Naive thymus-derived CD4-positive, alpha-beta T cell (primary cell): ENCODE measurements at regions of chr4 and their contacts with region 1.

Region 1: DNA sequence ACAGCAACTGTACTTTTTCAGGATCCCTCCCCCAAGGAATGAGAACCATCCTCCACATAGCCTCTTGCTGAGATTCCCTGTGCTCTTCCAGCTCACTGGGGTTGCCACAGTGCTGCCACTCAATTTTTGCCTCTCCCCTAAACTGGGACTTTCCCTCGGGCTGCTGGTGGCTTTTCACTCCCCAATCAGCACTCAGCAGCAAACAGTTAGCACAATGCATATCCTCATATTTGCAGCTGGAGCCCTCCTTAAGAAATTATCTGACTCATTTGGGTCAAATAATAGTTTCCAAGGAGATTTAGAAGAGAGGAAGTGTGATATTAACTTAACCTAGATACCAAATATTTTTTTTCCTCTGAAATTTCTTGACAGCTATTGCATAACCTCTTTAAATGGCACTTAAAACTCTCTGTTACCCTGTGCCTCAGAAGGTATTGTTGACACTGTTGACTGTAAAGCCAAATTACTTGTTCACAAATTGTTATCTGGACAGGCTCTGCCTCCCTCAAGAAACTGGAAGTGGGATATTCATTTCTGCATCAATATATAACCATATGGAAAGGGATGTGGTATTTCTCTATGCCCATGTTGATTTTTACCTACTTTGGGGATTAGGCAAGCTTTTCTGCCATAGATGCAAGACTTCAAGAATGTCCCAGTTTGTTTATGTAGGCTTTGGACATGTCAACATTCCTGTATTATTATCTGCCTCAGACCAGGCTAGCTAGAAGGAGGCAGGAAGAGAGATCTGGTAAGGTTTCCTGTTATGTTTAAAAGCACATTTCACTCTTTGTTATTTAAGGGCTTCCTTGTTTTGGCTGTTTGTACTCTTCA is 58.0 kb downstream of the SEPTIN11 start:
- DNase-seq: peak in 1 of 9 donors; percentile 22
- ATAC-seq: peak; percentile 90
- H3K4me3 ChIP-seq: peak overlapping the region; percentile 4
- H3K4me3 Mint-ChIP-seq: peak overlapping the region; percentile 23 to 84 (median 74)
- H3K27ac ChIP-seq: peak overlapping the region; percentile 44
- H3K27ac Mint-ChIP-seq: peak overlapping the region; percentile 66 to 93 (median 88)
- H3K4me1 ChIP-seq: peaks cover 15 to 41% of the 10 kb centered on the region in 2 donors
- H3K4me1 Mint-ChIP-seq: peaks cover 39 to 83% (median 69%) of the 10 kb centered on the region in 7 donors
- H3K27me3 ChIP-seq: no peaks in the 10 kb centered on the region
- H3K27me3 Mint-ChIP-seq: peaks cover 0 to 5% (median 0%) of the 10 kb centered on the region in 5 donors

Region 2: GRCh38 chr4:76984127-76984526 is 23.4 kb before region 1 on chr4:
- CTCF ChIA-PET with region 1: interaction called, 3 read pairs
- POLR2A ChIA-PET with region 1: interaction called, 34 read pairs
- intact Hi-C with region 1: no loop called
- DNase-seq: peak in 4 of 9 donors; percentile 17 to 34 (median 22)
- ATAC-seq: peak; percentile 68
- H3K4me3 ChIP-seq: no peak overlapping the region
- H3K4me3 Mint-ChIP-seq: peak overlapping the region; percentile 19 to 72 (median 52)
- H3K27ac ChIP-seq: no peak overlapping the region
- H3K27ac Mint-ChIP-seq: peak overlapping the region in 6 of 9 donors; percentile 33 to 61 (median 44)
- H3K4me1 ChIP-seq: peaks cover 35 to 37% of the 10 kb centered on the region in 2 donors
- H3K4me1 Mint-ChIP-seq: peaks cover 36 to 92% (median 79%) of the 10 kb centered on the region in 7 donors
- H3K27me3 ChIP-seq: no peaks in the 10 kb centered on the region
- H3K27me3 Mint-ChIP-seq: peaks cover 0 to 34% (median 0%) of the 10 kb centered on the region in 5 donors

Region 3: DNA sequence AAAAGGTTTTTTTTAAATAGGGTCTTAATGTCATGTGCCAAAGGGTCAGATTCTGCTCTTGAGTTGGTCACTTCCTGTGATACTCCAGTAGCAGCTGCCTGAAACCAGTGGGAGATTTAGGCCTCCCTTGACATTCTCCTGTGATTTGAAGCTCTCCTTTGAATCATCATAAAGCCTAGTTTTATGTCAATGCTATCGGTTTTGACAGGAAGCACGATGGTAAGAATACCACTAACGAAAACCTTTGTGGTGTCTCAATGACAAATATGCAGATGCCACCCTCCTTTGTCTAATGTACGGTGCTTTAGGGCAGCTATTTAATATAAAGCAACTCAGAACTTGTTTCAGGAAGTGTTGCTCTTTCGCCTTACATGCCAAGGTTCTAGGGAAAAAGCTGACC is 24.0 kb after region 1 on chr4:
- CTCF ChIA-PET with region 1: interaction called, 3 read pairs
- POLR2A ChIA-PET with region 1: interaction called, 3 read pairs
- intact Hi-C with region 1: loop called in 1 of 2 experiments (anchors 2 kb)
- DNase-seq: peak in 3 of 9 donors; percentile 31 to 47 (median 31)
- ATAC-seq: peak; percentile 82
- H3K4me3 ChIP-seq: no peak overlapping the region
- H3K4me3 Mint-ChIP-seq: peak overlapping the region in 5 of 10 donors; percentile 9 to 50 (median 10)
- H3K27ac ChIP-seq: no peak overlapping the region
- H3K27ac Mint-ChIP-seq: peak overlapping the region in 5 of 9 donors; percentile 23 to 76 (median 41)
- H3K4me1 ChIP-seq: peaks cover 16 to 31% of the 10 kb centered on the region in 2 donors
- H3K4me1 Mint-ChIP-seq: peaks cover 24 to 50% (median 45%) of the 10 kb centered on the region in 7 donors
- H3K27me3 ChIP-seq: no peaks in the 10 kb centered on the region
- H3K27me3 Mint-ChIP-seq: no peaks in the 10 kb centered on the region